ENCODE measurements at regions of chr14 and their contacts with region 1.

Region 1: GRCh38 chr14:101843665-101844064 is 82.2 kb downstream of the PPP2R5C start:
- DNase-seq: peak; percentile 28
- H3K4me3 Mint-ChIP-seq: no peak overlapping the region
- H3K27ac Mint-ChIP-seq: peak overlapping the region; percentile 80
- H3K4me1 Mint-ChIP-seq: peaks cover 80% of the 10 kb centered on the region
- H3K27me3 Mint-ChIP-seq: no peaks in the 10 kb centered on the region

Region 2: DNA sequence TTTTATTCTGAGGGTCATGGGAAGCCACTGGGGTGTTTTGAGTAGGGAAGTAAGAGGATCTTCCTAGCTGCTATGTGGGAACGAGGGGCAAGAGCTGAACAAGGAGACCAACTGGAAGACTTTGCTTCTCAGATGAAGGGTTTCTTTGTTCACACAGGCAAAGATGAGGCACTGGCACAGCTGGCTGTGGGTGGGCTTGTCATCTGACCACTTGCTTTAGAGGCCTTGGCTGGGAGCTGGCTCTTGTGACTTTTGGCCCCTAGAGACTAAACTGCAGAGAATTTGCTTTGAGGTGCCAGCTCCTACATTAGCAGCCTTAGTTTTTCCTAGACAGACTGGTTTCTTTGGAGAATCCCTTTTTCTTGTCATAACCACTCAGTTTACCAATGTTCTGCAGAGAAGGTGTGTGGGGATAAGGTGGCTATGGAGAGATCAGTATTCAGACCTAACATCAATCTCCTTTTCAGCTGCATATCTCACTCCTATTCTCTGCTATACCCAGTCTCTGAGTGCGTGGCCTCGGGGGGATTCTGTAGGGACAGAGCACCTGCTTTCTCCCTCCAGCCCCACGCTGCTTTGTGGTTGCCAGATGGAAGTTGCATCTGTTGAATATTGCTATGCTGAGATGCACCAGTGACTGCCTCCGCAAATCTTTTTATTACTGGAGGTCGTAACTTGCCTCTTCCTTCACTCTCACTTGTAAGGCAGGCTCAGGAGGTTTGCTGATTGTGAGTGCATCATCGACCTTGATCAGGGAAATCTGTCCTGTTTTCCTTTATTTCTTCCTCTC is 69.5 kb before region 1 on chr14:
- intact Hi-C with region 1: loop called (anchors 1 kb)
- DNase-seq: no peak
- H3K4me3 Mint-ChIP-seq: no peak overlapping the region
- H3K27ac Mint-ChIP-seq: no peak overlapping the region
- H3K4me1 Mint-ChIP-seq: peaks cover 40% of the 10 kb centered on the region
- H3K27me3 Mint-ChIP-seq: peaks cover 1% of the 10 kb centered on the region

Region 3: GRCh38 chr14:101855958-101856357 is 12.3 kb after region 1 on chr14:
- intact Hi-C with region 1: loop called (anchors 1 kb)
- DNase-seq: no peak
- H3K4me3 Mint-ChIP-seq: no peak overlapping the region
- H3K27ac Mint-ChIP-seq: no peak overlapping the region
- H3K4me1 Mint-ChIP-seq: peaks cover 68% of the 10 kb centered on the region
- H3K27me3 Mint-ChIP-seq: no peaks in the 10 kb centered on the region

Region 4: DNA sequence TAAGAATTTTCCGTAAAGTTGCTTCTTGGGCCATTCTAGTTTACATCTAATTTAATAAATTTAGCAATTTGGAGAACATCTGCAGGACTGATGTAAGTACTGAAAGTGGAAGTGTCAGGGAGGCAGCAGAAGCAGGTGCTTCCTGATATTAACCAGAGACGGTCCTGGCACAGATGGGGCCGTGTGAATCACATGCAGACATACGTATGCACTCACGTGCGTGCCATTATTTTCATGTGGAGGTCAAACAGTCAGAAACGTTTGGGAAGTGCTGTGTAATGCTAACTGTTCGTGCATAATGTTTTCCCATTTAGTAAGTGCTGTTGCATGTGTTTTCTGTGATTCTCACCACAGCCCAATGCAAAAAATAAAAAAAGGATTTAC is 32.9 kb after region 1 on chr14:
- intact Hi-C with region 1: loop called (anchors 5 kb)
- DNase-seq: peak; percentile 46
- H3K4me3 Mint-ChIP-seq: peak overlapping the region; percentile 65
- H3K27ac Mint-ChIP-seq: peak overlapping the region; percentile 81
- H3K4me1 Mint-ChIP-seq: peaks cover 80% of the 10 kb centered on the region
- H3K27me3 Mint-ChIP-seq: no peaks in the 10 kb centered on the region